ENCODE measurements at regions of chr12 and their contacts with region 1.

Region 1: DNA sequence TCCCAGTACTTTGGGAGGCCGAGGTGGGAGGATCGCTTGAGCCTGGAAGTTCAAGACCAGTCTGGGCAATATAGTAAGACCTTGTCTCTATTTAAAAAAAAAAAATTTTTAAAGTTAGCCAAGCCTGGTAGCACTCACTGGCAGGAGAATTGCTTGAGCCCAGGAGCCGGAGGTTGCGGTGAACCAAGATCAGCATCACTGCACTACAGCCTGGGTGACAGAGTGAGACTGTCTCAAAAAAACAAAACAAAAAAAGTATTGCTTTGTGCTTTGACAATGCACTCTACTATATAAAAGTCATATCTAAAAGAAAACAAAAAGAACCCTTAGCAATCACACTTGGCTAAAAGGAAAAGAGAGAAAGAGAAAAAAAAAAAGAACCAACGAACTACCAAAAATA is 26.8 kb downstream of the GNPTAB start:
- DNase-seq: no peak
- H3K4me3 ChIP-seq: no peak overlapping the region
- H3K27ac ChIP-seq: no peak overlapping the region
- H3K4me1 ChIP-seq: peaks cover 0 to 3% (median 0%) of the 10 kb centered on the region in 4 experiments; a peak in 2 of 7 replicates
- H3K27me3 ChIP-seq: no peaks in the 10 kb centered on the region
- CTCF ChIP-seq: no peak
- EP300 ChIP-seq: no peak
- POLR2A ChIP-seq: no peak
- RAD21 ChIP-seq: no peak

Region 2: DNA sequence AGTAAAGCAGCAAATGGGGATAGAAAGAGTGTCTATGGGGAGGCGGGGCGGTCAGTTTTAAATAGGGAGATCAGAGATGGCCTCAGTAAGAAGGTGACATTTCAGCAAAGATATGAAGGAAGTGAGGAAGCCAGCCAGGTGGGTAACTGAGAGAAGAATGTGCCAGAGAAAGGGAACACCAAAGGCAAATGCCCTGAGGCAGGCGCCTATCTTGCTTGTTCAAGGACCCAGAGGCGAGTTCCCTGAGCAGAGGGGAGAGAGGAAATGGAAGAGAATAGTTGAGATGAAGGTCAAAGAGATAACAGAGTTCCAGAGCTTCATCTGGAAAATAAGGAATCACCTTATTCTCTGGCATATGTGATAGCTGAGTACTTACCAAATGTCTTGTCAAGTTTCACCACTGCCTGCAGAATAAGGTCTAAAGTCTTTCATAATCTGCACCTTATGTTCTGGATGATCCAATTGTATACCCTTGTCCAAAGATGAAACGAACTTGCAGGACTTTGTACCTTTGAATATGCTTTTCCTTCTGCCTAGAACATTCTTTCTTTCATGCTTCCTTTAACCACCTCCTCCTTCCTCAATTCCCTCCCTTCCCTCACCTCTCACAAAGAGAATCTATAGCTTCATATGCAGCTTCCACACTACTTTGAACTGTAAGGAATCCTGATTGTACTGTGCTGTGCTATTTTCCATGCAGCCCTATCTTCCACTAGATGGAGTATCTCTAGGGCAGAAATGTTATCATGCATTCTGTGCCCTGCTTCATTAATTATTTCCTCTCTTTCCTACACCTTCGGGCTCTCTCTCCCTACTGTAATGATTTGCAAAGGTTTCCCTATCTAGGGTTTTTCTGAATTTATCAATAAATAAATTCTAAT is 11.7 kb before region 1 on chr12:
- CTCF ChIA-PET with region 1: interaction called, 15 read pairs
- POLR2A ChIA-PET with region 1: no interaction called
- DNase-seq: no peak
- H3K4me3 ChIP-seq: no peak overlapping the region
- H3K27ac ChIP-seq: no peak overlapping the region
- H3K4me1 ChIP-seq: no peaks in the 10 kb centered on the region
- H3K27me3 ChIP-seq: no peaks in the 10 kb centered on the region
- CTCF ChIP-seq: peak in 1 of 3 experiments; percentile 31; a peak in 1 of 4 replicates
- EP300 ChIP-seq: no peak
- POLR2A ChIP-seq: no peak
- RAD21 ChIP-seq: no peak

Measured in H1 (cell line).